ENCODE measurements at regions of chr11 and their contacts with region 1.

Region 1: GRCh38 chr11:61695917-61696316 is 15.7 kb downstream of the DAGLA start:
- DNase-seq: peak in 1 of 2 experiments; percentile 63
- H3K4me3 ChIP-seq: no peak overlapping the region
- H3K27ac ChIP-seq: no peak overlapping the region
- H3K4me1 ChIP-seq: peaks cover 9 to 38% (median 29%) of the 10 kb centered on the region in 4 experiments
- H3K27me3 ChIP-seq: peaks cover 0 to 3% (median 1%) of the 10 kb centered on the region in 4 experiments; a peak in 1 of 7 replicates
- CTCF ChIP-seq: 0 out of 4 replicates have a peak, but pooled peaks of 1 of the 3 experiments have one; percentile 17
- EP300 ChIP-seq: no peak
- POLR2A ChIP-seq: no peak
- RAD21 ChIP-seq: peak in 1 of 2 experiments; percentile 17; a peak in 1 of 4 replicates

Region 2: GRCh38 chr11:61679893-61680621 is 15.9 kb before region 1 on chr11 and contains the start of gene DAGLA:
- CTCF ChIA-PET with region 1: interaction called, 46 read pairs
- POLR2A ChIA-PET with region 1: interaction called, 6 read pairs
- DNase-seq: peak in 1 of 2 experiments; percentile 90
- H3K4me3 ChIP-seq: peak within 1 kb of the TSS; percentile 6 to 50 (median 26)
- H3K27ac ChIP-seq: no peak within 1 kb of the TSS
- H3K4me1 ChIP-seq: peaks cover 0 to 12% (median 4%) of the 10 kb centered on the region in 4 experiments; a peak in 5 of 7 replicates
- H3K27me3 ChIP-seq: peaks cover 0 to 19% (median 12%) of the 10 kb centered on the region in 4 experiments; a peak in 5 of 7 replicates
- CTCF ChIP-seq: peak; percentile 86 to 99 (median 87)
- EP300 ChIP-seq: 0 out of 3 replicates have a peak, but pooled peaks of 1 of the 2 experiments have one; percentile 3
- POLR2A ChIP-seq: no peak
- RAD21 ChIP-seq: peak; percentile 53 to 71
- total RNA-seq, gene DAGLA: 6.4 and 6.6 TPM in 2 replicates

Region 3: GRCh38 chr11:61711498-61711897 is 15.6 kb after region 1 on chr11:
- CTCF ChIA-PET with region 1: interaction called, 43 read pairs
- POLR2A ChIA-PET with region 1: interaction called, 4 read pairs
- DNase-seq: no peak
- H3K4me3 ChIP-seq: no peak overlapping the region
- H3K27ac ChIP-seq: no peak overlapping the region
- H3K4me1 ChIP-seq: peaks cover 0 to 20% (median 11%) of the 10 kb centered on the region in 4 experiments; a peak in 5 of 7 replicates
- H3K27me3 ChIP-seq: no peaks in the 10 kb centered on the region
- CTCF ChIP-seq: no peak
- EP300 ChIP-seq: no peak
- POLR2A ChIP-seq: no peak
- RAD21 ChIP-seq: no peak

Region 4: GRCh38 chr11:61718621-61719302 is 22.8 kb after region 1 on chr11:
- CTCF ChIA-PET with region 1: interaction called, 16 read pairs
- POLR2A ChIA-PET with region 1: interaction called, 4 read pairs
- DNase-seq: peak in 1 of 2 experiments; percentile 87
- H3K4me3 ChIP-seq: peak overlapping the region; percentile 18 to 62 (median 32); a peak in 7 of 8 replicates
- H3K27ac ChIP-seq: no peak overlapping the region; the same call in 1 of the 2 replicates
- H3K4me1 ChIP-seq: peaks cover 0 to 34% (median 23%) of the 10 kb centered on the region in 4 experiments; a peak in 6 of 7 replicates
- H3K27me3 ChIP-seq: no peaks in the 10 kb centered on the region
- CTCF ChIP-seq: no peak
- EP300 ChIP-seq: no peak
- POLR2A ChIP-seq: peak in 1 of 2 experiments; percentile 68; a peak in 2 of 3 replicates
- RAD21 ChIP-seq: no peak

Region 5: DNA sequence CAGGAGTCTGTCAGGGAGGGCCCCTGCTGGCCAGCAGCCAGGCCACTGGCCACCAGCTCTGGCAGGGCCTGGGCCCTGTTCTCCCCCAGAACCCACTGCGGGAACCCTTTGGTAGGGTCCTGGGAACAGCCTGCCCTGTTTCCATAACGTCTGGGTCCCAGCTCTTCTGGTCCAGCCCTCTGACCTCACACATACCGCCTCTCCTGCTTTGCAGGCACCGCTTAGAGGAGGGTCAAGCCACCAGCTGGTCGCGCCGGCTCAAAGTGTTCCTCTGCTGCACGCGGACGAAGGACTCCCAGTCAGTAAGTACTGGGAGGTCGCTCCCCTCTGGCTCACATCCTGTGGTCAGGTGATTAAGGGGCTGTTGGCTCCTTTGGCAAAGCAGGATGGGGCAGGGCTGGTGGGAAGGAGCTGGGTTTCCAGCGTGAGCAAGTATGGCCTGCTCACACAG is 29.9 kb after region 1 on chr11:
- CTCF ChIA-PET with region 1: interaction called, 10 read pairs
- POLR2A ChIA-PET with region 1: no interaction called
- DNase-seq: no peak
- H3K4me3 ChIP-seq: no peak overlapping the region
- H3K27ac ChIP-seq: no peak overlapping the region
- H3K4me1 ChIP-seq: no peaks in the 10 kb centered on the region
- H3K27me3 ChIP-seq: no peaks in the 10 kb centered on the region
- CTCF ChIP-seq: no peak
- EP300 ChIP-seq: no peak
- POLR2A ChIP-seq: no peak
- RAD21 ChIP-seq: no peak